ENCODE measurements at regions of chrX and their contacts with region 1.

Region 1: GRCh38 chrX:102950908-102951866 is 14.1 kb downstream of the RAB40AL start:
- DNase-seq: peak; percentile 33 to 83
- H3K4me3 ChIP-seq: peak overlapping the region; percentile 25 to 48 (median 38); a peak in 7 of 8 replicates
- H3K27ac ChIP-seq: no peak overlapping the region
- H3K4me1 ChIP-seq: peaks cover 0 to 4% (median 0%) of the 10 kb centered on the region in 4 experiments; a peak in 1 of 7 replicates
- H3K27me3 ChIP-seq: no peaks in the 10 kb centered on the region
- CTCF ChIP-seq: peak; percentile 50 to 66 (median 60)
- EP300 ChIP-seq: no peak
- POLR2A ChIP-seq: no peak
- RAD21 ChIP-seq: peak; percentile 57 to 68

Region 2: DNA sequence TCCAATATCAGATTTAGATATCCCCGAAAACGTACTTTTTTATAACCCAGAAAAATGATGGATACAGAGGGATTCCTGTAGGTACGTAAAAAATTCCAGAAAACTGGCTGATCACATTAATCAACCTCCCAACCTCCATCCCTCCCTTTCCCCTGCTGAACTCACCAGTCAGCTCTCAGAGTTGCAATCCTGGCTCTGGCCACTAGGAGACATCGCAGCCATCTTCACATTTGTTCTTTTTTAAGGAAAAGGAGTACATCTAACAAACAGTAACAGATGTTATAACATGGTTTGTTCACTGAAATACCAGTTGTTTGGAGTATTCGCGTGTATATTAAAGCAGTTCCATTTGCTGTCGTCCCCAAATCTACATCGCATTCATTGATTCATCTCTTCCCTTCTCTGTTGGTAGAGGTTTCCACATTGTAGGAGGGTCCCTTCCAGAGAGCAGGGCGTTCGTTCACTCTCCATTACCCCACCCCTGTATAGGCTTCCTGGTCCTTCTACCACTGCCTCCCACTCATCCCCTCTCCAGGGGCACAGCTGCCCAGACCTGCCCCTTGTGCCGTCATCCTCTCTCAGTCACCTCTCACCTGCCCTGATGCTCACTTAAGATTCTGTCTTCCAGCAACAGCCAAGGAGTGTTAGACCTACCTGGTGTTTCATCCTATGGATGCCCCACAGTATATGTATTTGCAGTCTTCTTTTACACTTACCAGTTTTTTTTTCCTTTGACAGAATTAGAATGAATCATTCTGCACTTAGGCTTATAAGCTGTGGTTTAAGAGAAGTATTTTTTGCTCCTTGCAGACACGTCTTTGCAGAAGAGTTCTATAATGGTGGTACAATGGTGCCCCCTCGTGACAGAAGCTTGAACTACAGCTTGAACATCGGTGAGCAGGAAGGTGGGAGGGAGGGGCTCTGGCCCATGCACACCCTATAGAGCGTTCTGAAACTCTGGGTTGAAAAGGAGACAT is 51.0 kb before region 1 on chrX:
- CTCF ChIA-PET with region 1: interaction called, 10 read pairs
- POLR2A ChIA-PET with region 1: no interaction called
- DNase-seq: peak in 1 of 2 experiments; percentile 84
- H3K4me3 ChIP-seq: no peak overlapping the region
- H3K27ac ChIP-seq: no peak overlapping the region
- H3K4me1 ChIP-seq: no peaks in the 10 kb centered on the region
- H3K27me3 ChIP-seq: no peaks in the 10 kb centered on the region
- CTCF ChIP-seq: peak; percentile 58 to 67 (median 66)
- EP300 ChIP-seq: no peak
- POLR2A ChIP-seq: no peak
- RAD21 ChIP-seq: peak; percentile 60 to 64

Region 3: GRCh38 chrX:102934624-102935023 is 16.6 kb before region 1 on chrX:
- CTCF ChIA-PET with region 1: interaction called, 28 read pairs
- POLR2A ChIA-PET with region 1: no interaction called
- DNase-seq: peak in 1 of 2 experiments; percentile 48
- H3K4me3 ChIP-seq: no peak overlapping the region
- H3K27ac ChIP-seq: no peak overlapping the region
- H3K4me1 ChIP-seq: no peaks in the 10 kb centered on the region
- H3K27me3 ChIP-seq: no peaks in the 10 kb centered on the region
- CTCF ChIP-seq: peak; percentile 4 to 66 (median 22); a peak in 3 of 4 replicates
- EP300 ChIP-seq: no peak
- POLR2A ChIP-seq: no peak
- RAD21 ChIP-seq: peak in 1 of 2 experiments; percentile 14; a peak in 2 of 4 replicates

Region 4: GRCh38 chrX:103175944-103176753 is 225.0 kb after region 1 on chrX:
- CTCF ChIA-PET with region 1: interaction called, 40 read pairs
- POLR2A ChIA-PET with region 1: no interaction called
- DNase-seq: peak in 1 of 2 experiments; percentile 70
- H3K4me3 ChIP-seq: peak overlapping the region in 1 of 4 experiments; percentile 30; a peak in 1 of 8 replicates
- H3K27ac ChIP-seq: no peak overlapping the region
- H3K4me1 ChIP-seq: no peaks in the 10 kb centered on the region; a peak in 1 of 7 replicates
- H3K27me3 ChIP-seq: no peaks in the 10 kb centered on the region
- CTCF ChIP-seq: peak; percentile 42 to 69 (median 42); a peak in 3 of 4 replicates
- EP300 ChIP-seq: no peak
- POLR2A ChIP-seq: no peak
- RAD21 ChIP-seq: peak; percentile 71 to 78

Region 5: DNA sequence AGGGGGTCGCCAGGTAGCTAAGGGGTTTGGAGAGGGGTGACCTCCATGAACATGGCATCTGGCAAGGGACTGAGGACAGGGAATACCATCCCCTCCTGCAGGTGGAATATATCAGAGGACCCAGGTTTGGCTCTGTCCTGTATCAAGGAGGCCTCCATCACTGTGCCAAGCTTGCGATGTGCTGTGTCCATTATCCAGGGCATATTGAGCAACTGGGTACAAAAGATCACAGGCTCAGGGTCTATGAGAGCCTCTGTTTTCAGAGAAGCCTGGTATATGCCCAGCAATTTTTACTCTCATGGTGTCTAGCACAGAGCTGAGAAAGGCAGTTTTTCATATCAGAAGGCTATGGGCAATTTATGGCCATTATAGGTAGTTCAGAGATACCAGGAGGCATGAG is 341.9 kb after region 1 on chrX:
- CTCF ChIA-PET with region 1: no interaction called
- POLR2A ChIA-PET with region 1: no interaction called
- DNase-seq: no peak
- H3K4me3 ChIP-seq: no peak overlapping the region
- H3K27ac ChIP-seq: no peak overlapping the region
- H3K4me1 ChIP-seq: no peaks in the 10 kb centered on the region
- H3K27me3 ChIP-seq: peaks cover 0 to 4% (median 1%) of the 10 kb centered on the region in 4 experiments; a peak in 2 of 7 replicates
- CTCF ChIP-seq: no peak
- EP300 ChIP-seq: no peak
- POLR2A ChIP-seq: no peak
- RAD21 ChIP-seq: no peak